HepG2 (cell line): ENCODE measurements at regions of chr2 and their contacts with region 1.

Region 1: DNA sequence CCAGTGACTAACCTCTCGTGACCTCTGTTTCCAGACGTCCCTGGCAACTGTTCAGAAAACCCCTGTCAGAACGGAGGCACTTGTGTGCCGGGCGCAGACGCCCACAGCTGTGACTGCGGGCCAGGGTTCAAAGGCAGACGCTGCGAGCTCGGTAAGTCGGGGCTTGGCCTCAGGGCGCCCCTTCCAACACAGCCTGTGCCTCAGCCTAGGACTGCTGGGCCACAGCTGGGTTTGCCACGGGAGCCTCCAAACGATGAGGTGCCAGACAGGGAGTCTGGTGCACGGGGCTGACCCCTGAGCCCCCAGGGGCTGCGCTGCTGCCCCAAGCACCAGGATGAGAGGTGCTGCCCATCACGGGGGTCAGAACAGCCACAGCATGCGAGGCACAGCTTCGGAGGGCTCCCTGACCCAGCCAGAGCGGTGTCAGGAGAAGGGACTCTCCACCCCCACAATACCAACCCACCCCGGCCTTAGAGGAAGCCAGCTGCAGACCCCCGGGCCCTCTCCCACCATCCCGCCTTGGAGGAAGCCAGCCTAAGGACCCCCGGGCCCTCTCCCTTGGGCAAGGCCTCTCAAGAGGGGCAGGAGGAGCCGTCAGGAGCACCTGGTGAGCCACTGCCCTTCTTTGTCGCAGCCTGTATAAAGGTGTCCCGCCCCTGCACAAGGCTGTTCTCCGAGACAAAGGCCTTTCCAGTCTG is 20.3 kb downstream of the MTERF4 start:
- DNase-seq: no peak
- ATAC-seq: peak; percentile 59
- H3K4me3 ChIP-seq: peak overlapping the region in 1 of 3 experiments; percentile 49; a peak in 1 of 6 replicates
- H3K27ac ChIP-seq: no peak overlapping the region
- H3K4me1 ChIP-seq: peaks cover 28% of the 10 kb centered on the region
- H3K27me3 ChIP-seq: no peaks in the 10 kb centered on the region
- CTCF ChIP-seq: no peak
- EP300 ChIP-seq: no peak
- POLR2A ChIP-seq: no peak
- RAD21 ChIP-seq: no peak

Region 2: GRCh38 chr2:240998120-240998994 is 83.4 kb before region 1 on chr2 and contains the start of gene SNED1:
- CTCF ChIA-PET with region 1: no interaction called
- POLR2A ChIA-PET with region 1: no interaction called
- in situ Hi-C with region 1: no loop called
- intact Hi-C with region 1: no loop called
- DNase-seq: peak; percentile 65
- ATAC-seq: peak; percentile 76
- H3K4me3 ChIP-seq: peak within 1 kb of the TSS; percentile 53 to 77 (median 64)
- H3K27ac ChIP-seq: no peak within 1 kb of the TSS
- H3K4me1 ChIP-seq: peaks cover 47% of the 10 kb centered on the region
- H3K27me3 ChIP-seq: peaks cover 23 to 62% of the 10 kb centered on the region in 2 experiments; a peak in 4 of 5 replicates
- CTCF ChIP-seq: peak; percentile 26
- EP300 ChIP-seq: no peak
- POLR2A ChIP-seq: no peak
- RAD21 ChIP-seq: no peak
- total RNA-seq, gene SNED1: 0.15 TPM in 1 of 2 replicates, not detected in the other

Region 3: DNA sequence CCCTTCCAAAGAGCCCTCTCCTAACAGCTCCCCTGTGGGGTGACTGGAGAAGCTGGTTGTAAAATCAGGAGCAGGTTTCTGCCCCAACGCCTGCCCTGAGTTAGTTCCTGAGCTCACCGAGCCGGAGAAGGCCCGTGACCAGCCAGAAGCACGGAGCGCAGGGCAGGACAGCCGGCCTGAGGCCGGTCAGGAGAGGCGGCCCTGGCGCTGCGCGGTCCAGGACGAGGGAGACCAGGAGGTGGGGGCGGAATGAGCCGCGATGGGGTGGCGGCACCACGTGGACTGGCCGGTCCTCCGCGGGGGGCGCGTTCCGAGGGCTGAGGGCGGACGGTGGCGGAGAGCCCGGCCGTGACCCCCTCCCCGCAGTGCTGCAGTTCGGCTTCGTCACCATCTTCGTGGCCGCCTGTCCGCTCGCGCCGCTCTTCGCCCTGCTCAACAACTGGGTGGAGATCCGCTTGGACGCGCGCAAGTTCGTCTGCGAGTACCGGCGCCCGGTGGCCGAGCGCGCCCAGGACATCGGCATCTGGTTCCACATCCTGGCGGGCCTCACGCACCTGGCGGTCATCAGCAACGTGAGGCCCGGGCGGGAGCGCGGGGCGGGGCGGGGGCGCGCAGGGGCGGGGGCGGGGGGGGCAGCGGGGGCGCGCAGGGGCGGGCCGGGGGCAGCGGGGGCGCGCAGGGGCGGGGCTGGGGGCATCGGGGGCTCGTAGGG is 135.7 kb after region 1 on chr2:
- CTCF ChIA-PET with region 1: no interaction called
- POLR2A ChIA-PET with region 1: interaction called, 3 read pairs
- in situ Hi-C with region 1: no loop called
- intact Hi-C with region 1: loop called (anchors 2 kb)
- DNase-seq: peak; percentile 80
- ATAC-seq: peak; percentile 75
- H3K4me3 ChIP-seq: peak overlapping the region; percentile 50 to 76 (median 74)
- H3K27ac ChIP-seq: peak overlapping the region; percentile 79
- H3K4me1 ChIP-seq: peaks cover 64% of the 10 kb centered on the region
- H3K27me3 ChIP-seq: peaks cover 4 to 21% of the 10 kb centered on the region in 2 experiments; a peak in 3 of 5 replicates
- CTCF ChIP-seq: peak; percentile 56
- EP300 ChIP-seq: 0 out of 4 replicates have a peak, but pooled peaks of 1 of the 2 experiments have one; percentile 28
- POLR2A ChIP-seq: peak in 1 of 2 experiments; percentile 66; a peak in 2 of 4 replicates
- RAD21 ChIP-seq: peak; percentile 69